T-cell (primary cell): ENCODE measurements at regions of chr18 and their contacts with region 1.

Region 1: GRCh38 chr18:950882-951539 is 46.3 kb downstream of the ADCYAP1 start:
- DNase-seq: no peak
- ATAC-seq: no peak
- H3K4me3 ChIP-seq: no peak overlapping the region
- H3K4me3 Mint-ChIP-seq: no peak overlapping the region
- H3K27ac ChIP-seq: no peak overlapping the region
- H3K27ac Mint-ChIP-seq: no peak overlapping the region
- H3K4me1 ChIP-seq: no peaks in the 10 kb centered on the region
- H3K4me1 Mint-ChIP-seq: no peaks in the 10 kb centered on the region
- H3K27me3 ChIP-seq: peaks cover 0 to 16% of the 10 kb centered on the region in 2 experiments
- H3K27me3 Mint-ChIP-seq: peaks cover 12 to 15% of the 10 kb centered on the region in 2 donors

Region 2: DNA sequence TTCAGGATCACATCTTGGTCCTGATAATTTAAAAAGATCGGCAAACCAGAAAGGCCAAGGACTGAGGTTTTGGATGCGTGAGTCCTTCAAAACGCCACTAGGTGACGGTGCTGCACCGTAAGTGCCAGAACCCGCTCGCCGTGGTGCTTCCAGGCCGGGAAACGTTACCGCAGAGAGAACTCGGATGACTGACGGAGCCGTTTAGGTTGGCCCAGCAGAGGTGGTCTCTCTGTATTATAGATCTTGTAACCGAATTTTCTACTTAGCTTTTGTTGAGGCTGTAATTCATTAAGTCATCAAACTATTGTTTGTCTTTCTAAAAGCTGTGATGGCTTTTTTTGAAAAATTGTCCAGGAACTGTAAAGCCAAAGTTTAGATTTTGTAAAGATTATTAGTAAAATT is 86.1 kb before region 1 on chr18:
- CTCF ChIA-PET with region 1: no interaction called
- POLR2A ChIA-PET with region 1: no interaction called
- DNase-seq: peak; percentile 9 to 77 (median 47)
- ATAC-seq: peak; percentile 66 to 72 (median 68)
- H3K4me3 ChIP-seq: no peak overlapping the region
- H3K4me3 Mint-ChIP-seq: no peak overlapping the region
- H3K27ac ChIP-seq: no peak overlapping the region
- H3K27ac Mint-ChIP-seq: no peak overlapping the region
- H3K4me1 ChIP-seq: peaks cover 0 to 3% of the 10 kb centered on the region in 2 experiments
- H3K4me1 Mint-ChIP-seq: peaks cover 0 to 7% (median 6%) of the 10 kb centered on the region in 3 donors
- H3K27me3 ChIP-seq: peaks cover 5 to 17% of the 10 kb centered on the region in 2 experiments
- H3K27me3 Mint-ChIP-seq: peaks cover 13 to 28% of the 10 kb centered on the region in 2 donors

Region 3: DNA sequence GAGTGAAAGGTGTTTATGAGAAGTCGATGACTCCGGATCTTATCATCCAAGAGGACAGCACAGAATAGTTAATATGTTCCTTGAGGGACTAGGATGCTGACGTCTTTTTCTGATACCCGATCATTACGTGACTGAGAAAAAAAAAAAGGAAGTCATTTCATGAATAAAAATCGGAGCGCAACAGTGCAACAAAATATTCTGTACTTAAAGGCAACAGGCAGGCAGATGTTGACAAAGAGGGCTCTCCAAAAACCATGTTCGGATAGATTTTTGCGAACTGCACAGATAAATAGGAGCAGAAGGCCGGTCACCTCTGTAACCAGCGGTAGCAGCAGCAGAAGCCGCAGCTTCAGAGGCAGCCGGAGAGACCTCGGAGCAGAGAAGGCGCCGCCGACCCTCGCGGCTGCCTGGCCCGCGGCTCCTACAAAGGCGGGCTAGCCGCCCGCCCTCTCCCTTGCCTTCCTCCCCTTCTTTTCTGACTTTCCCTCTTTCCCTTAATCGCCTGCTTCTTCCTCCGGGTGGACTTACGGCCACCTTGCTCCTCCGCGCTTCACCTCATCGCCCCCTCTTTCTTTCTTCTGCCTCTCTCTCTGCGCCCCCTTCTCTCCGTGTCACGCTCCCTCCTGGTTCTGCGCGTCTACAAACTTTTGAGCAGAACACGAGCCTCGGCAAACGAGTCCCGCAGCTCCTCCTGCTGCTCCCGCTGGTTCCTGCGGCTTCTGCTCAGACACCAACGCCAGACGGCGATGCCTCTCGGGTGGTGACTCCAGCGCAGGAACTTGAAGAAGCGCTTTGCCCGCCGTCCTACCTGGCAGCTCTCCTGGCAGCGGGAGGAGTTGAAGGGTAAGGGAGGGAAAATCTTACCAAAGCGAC is 46.6 kb before region 1 on chr18 and contains the start of gene ADCYAP1:
- CTCF ChIA-PET with region 1: interaction called in 1 of 2 experiments, 12 read pairs
- POLR2A ChIA-PET with region 1: interaction called in 1 of 2 experiments, 3 read pairs
- DNase-seq: no peak
- ATAC-seq: no peak
- H3K4me3 ChIP-seq: no peak within 1 kb of the TSS
- H3K4me3 Mint-ChIP-seq: peak within 1 kb of the TSS in 1 of 3 donors; percentile 76
- H3K27ac ChIP-seq: no peak within 1 kb of the TSS
- H3K27ac Mint-ChIP-seq: no peak within 1 kb of the TSS
- H3K4me1 ChIP-seq: peaks cover 0 to 27% of the 10 kb centered on the region in 2 experiments
- H3K4me1 Mint-ChIP-seq: peaks cover 22 to 27% (median 24%) of the 10 kb centered on the region in 3 donors
- H3K27me3 ChIP-seq: peaks cover 10 to 69% of the 10 kb centered on the region in 2 experiments
- H3K27me3 Mint-ChIP-seq: peaks cover 65 to 74% of the 10 kb centered on the region in 2 donors
- total RNA-seq, gene ADCYAP1: not detected

Region 4: DNA sequence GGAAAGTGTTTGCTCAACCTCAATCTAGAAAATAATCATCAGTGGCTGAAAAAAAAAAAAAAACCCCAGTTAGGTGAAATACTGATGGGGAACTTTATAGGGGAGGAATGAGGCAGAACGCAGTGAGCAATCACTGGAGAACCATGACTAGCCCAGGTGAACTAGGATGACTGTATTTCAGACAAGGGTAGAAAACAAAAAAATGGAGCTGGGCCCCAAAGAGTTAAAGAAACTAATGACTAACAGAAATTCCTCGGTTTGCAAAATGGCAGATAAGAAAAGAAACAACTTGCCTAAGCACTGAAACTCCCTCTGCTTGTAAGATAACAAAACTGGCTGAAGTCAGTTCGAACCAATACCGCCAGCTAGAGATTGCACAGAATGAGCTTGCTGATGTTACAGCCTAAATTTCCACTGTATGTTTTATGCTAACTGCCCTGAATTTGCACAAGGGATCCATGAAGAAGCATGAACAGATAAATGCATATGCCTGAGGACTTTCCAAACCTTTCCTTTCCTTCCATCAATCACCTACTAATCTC is 1374.4 kb after region 1 on chr18:
- CTCF ChIA-PET with region 1: no interaction called
- POLR2A ChIA-PET with region 1: no interaction called
- DNase-seq: no peak
- ATAC-seq: no peak
- H3K4me3 ChIP-seq: no peak overlapping the region
- H3K4me3 Mint-ChIP-seq: no peak overlapping the region
- H3K27ac ChIP-seq: no peak overlapping the region
- H3K27ac Mint-ChIP-seq: no peak overlapping the region
- H3K4me1 ChIP-seq: no peaks in the 10 kb centered on the region
- H3K4me1 Mint-ChIP-seq: no peaks in the 10 kb centered on the region
- H3K27me3 ChIP-seq: peaks cover 3 to 7% of the 10 kb centered on the region in 2 experiments
- H3K27me3 Mint-ChIP-seq: peaks cover 16 to 35% of the 10 kb centered on the region in 2 donors